ENCODE measurements at regions of chr10 and their contacts with region 1.

Region 1: DNA sequence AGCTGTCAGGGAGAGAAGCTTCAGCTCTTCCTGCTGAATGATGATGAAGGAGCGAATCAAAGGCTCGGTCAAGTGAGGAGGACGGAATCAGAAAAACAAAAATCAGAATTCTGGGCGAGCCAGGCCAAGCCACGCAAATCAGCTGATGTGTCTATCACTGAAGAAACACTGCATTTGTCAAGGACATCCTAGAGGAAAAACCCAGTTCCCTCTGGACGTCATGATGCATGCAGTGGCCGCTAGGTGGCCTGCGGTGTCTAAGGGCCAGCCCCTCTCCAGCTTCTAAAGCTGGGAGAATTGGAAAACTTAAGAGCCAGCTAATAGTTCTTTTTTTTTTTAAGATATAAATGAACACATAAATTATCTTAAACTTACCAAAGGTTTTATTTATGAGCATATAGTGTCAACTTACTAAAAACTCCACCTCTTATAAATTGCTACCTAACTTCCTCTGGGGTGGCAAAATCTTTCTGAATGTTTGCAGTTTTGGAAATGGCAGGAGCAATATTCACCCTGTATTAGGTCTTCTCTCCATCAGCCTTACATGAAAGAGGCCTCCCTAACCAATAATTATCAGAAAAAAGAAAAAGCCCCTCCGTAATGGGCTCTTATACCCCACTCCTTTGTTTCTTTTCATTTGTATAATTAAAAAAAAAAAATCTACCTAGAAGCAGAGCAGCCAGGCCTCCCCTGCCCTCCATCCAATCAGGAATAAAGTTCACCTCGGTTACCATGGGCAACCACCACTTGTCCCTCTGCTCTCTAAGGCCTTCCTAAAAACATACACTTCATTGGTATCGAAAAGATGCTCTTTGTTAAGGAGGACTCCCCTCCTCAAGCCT is 186.8 kb downstream of the USP6NL start:
- DNase-seq: peak; percentile 36
- ATAC-seq: peak; percentile 82
- H3K4me3 ChIP-seq: no peak overlapping the region
- H3K27ac ChIP-seq: no peak overlapping the region
- H3K4me1 ChIP-seq: no peaks in the 10 kb centered on the region
- H3K27me3 ChIP-seq: no peaks in the 10 kb centered on the region; the same call in 1 of the 2 replicates
- CTCF ChIP-seq: peak; percentile 56
- POLR2A ChIP-seq: no peak
- RAD21 ChIP-seq: peak; percentile 49

Region 2: DNA sequence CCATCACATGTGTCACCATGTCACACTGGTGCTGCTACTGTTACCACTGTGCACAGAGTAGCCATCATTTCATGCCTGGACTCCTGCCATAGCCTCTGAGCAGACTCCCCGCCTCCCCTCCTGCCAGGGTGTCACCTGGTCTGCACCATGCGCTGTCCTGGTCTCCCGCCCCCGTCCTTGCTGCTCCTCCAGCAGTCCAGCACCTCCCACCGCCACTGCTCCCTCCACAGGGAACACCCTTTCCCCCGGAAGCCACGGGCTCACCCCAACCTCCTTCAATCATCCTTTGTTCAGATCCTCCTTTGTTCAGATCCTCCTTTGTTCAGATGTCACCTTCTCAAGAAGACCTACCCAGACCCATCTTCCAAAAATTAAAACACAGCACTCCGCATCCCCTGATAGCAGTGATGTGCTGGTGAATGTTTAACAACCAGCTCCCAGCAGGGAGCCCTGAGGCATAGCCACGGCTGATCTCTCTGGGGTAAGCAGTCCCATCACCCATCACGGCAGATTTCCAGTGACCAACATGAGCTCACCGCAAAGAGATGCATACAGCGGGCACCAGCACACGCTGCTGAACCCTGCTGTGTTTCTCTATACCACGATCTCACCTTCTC is 51.0 kb before region 1 on chr10:
- CTCF ChIA-PET with region 1: no interaction called
- POLR2A ChIA-PET with region 1: no interaction called
- dilution Hi-C with region 1: no loop called
- in situ Hi-C with region 1: no loop called
- intact Hi-C with region 1: no loop called
- DNase-seq: no peak
- ATAC-seq: no peak
- H3K4me3 ChIP-seq: no peak overlapping the region
- H3K27ac ChIP-seq: no peak overlapping the region
- H3K4me1 ChIP-seq: no peaks in the 10 kb centered on the region
- H3K27me3 ChIP-seq: no peaks in the 10 kb centered on the region
- CTCF ChIP-seq: no peak
- POLR2A ChIP-seq: no peak
- RAD21 ChIP-seq: no peak

Region 3: DNA sequence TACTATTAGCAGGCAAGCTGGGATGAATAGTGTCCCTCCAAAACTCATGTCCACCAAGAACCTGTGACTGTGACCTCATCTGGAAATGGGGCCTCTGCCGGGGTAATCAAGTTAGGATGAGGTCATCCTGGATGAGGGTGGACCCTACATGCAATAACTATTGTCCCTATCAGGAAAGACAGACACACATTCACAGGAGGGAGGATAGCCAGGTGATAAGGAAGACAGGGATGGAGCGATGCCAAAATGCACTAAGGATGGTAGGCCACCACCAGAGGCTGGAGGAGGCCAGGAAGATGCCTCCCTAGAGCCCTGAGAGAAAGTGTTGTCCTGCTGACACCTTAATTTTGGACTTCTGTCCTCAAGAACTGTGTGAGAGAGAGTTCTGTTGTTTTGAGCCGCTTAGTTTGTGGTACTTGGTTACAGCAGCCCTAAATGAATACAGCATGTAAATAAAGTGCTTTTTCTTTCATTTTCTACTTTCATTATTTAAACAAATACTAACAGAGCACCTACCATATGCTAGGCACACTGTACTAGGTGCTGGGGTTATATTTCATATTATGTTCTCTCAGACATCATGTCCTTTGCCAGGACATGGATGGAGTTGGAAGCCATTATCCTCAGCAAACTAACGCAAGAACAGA is 74.9 kb after region 1 on chr10:
- CTCF ChIA-PET with region 1: no interaction called
- POLR2A ChIA-PET with region 1: no interaction called
- dilution Hi-C with region 1: no loop called
- in situ Hi-C with region 1: no loop called
- intact Hi-C with region 1: loop called (anchors 5 kb)
- DNase-seq: no peak
- ATAC-seq: no peak
- H3K4me3 ChIP-seq: no peak overlapping the region
- H3K27ac ChIP-seq: no peak overlapping the region
- H3K4me1 ChIP-seq: no peaks in the 10 kb centered on the region
- H3K27me3 ChIP-seq: no peaks in the 10 kb centered on the region
- CTCF ChIP-seq: no peak
- POLR2A ChIP-seq: no peak
- RAD21 ChIP-seq: no peak

Region 4: DNA sequence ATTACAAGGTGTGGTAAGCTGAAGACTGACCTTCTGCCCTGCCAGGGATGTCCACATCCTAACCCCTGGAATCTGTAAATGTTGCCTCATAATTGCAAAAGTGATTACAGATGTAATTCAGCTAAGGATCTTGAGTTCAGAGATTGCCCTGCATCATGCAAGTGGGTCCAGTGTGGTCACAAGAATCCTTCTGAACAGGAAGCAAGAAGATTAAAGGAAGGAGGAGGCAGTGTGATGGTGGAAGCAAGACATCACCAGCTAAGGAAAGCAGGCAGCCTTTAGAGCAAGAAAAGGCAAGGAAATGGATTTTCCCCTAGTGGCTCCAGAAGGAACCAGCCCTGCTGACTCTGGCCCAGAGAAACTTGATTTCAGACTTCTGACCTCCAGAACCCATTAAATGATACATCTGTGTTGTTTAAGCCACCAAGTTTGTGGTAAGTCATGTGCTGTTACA is 108.7 kb after region 1 on chr10:
- CTCF ChIA-PET with region 1: no interaction called
- POLR2A ChIA-PET with region 1: no interaction called
- dilution Hi-C with region 1: no loop called
- in situ Hi-C with region 1: no loop called
- intact Hi-C with region 1: no loop called
- DNase-seq: peak; percentile 33
- ATAC-seq: peak; percentile 70
- H3K4me3 ChIP-seq: no peak overlapping the region
- H3K27ac ChIP-seq: no peak overlapping the region
- H3K4me1 ChIP-seq: peaks cover 13% of the 10 kb centered on the region
- H3K27me3 ChIP-seq: no peaks in the 10 kb centered on the region
- CTCF ChIP-seq: 0 out of 2 replicates have a peak, but pooled peaks have one; percentile 18
- POLR2A ChIP-seq: no peak
- RAD21 ChIP-seq: no peak

Region 5: DNA sequence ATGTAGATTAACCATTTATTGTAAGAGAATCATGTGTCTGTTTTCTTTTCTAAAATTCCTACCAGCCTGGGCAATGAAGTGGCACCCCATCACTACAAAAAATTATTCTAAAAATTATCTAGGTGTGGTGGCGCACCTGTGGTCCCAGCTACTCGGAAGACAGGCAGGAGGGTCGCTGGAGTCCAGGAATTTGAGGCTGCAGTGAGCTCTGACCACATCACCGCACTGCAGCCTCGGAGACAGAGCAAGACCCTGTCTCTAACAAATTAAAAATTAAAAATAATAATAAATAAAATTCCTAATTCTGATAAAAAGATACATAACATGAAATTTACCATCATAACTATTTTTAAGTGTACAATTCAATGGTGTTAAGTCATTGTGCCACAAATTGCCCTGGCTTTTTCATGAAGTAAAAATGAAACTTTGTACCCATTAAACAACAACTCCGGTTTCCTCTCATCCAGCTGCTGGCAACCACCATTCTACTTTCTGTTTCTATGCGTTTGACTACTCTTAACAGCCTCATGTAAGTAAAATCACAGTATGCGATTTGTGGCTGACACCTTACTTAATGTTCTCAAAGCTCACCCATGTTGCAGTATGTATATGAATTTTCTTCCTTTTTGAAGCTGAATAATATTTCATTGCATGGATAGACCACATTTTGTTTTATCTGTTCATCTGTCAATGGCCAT is 207.4 kb after region 1 on chr10:
- CTCF ChIA-PET with region 1: no interaction called
- POLR2A ChIA-PET with region 1: no interaction called
- dilution Hi-C with region 1: no loop called
- in situ Hi-C with region 1: no loop called
- intact Hi-C with region 1: no loop called
- DNase-seq: no peak
- ATAC-seq: no peak
- H3K4me3 ChIP-seq: no peak overlapping the region
- H3K27ac ChIP-seq: no peak overlapping the region
- H3K4me1 ChIP-seq: no peaks in the 10 kb centered on the region
- H3K27me3 ChIP-seq: peaks cover 1% of the 10 kb centered on the region; the same call in 1 of the 2 replicates
- CTCF ChIP-seq: no peak
- POLR2A ChIP-seq: no peak
- RAD21 ChIP-seq: no peak

Region 6: GRCh38 chr10:11757821-11758463 is 333.3 kb after region 1 on chr10:
- CTCF ChIA-PET with region 1: interaction called, 3 read pairs
- POLR2A ChIA-PET with region 1: no interaction called
- dilution Hi-C with region 1: no loop called
- in situ Hi-C with region 1: no loop called
- intact Hi-C with region 1: loop called (anchors 5 kb)
- DNase-seq: peak; percentile 81
- ATAC-seq: peak; percentile 98
- H3K4me3 ChIP-seq: no peak overlapping the region
- H3K27ac ChIP-seq: 0 out of 2 replicates have a peak overlapping the region, but pooled peaks have one; percentile 16
- H3K4me1 ChIP-seq: peaks cover 7% of the 10 kb centered on the region; the same call in 1 of the 2 replicates
- H3K27me3 ChIP-seq: no peaks in the 10 kb centered on the region
- CTCF ChIP-seq: peak; percentile 90
- POLR2A ChIP-seq: 0 out of 2 replicates have a peak, but pooled peaks have one; percentile 28
- RAD21 ChIP-seq: peak; percentile 89

Measured in IMR-90 (cell line).